ENCODE measurements at regions of chr18 and their contacts with region 1.

Region 1: GRCh38 chr18:45690975-45691815 is 32.8 kb upstream of the SLC14A1 start:
- DNase-seq: peak; percentile 92
- H3K4me3 Mint-ChIP-seq: no peak overlapping the region
- H3K27ac Mint-ChIP-seq: no peak overlapping the region
- H3K4me1 Mint-ChIP-seq: peaks cover 35% of the 10 kb centered on the region
- H3K27me3 Mint-ChIP-seq: peaks cover 49% of the 10 kb centered on the region

Region 2: DNA sequence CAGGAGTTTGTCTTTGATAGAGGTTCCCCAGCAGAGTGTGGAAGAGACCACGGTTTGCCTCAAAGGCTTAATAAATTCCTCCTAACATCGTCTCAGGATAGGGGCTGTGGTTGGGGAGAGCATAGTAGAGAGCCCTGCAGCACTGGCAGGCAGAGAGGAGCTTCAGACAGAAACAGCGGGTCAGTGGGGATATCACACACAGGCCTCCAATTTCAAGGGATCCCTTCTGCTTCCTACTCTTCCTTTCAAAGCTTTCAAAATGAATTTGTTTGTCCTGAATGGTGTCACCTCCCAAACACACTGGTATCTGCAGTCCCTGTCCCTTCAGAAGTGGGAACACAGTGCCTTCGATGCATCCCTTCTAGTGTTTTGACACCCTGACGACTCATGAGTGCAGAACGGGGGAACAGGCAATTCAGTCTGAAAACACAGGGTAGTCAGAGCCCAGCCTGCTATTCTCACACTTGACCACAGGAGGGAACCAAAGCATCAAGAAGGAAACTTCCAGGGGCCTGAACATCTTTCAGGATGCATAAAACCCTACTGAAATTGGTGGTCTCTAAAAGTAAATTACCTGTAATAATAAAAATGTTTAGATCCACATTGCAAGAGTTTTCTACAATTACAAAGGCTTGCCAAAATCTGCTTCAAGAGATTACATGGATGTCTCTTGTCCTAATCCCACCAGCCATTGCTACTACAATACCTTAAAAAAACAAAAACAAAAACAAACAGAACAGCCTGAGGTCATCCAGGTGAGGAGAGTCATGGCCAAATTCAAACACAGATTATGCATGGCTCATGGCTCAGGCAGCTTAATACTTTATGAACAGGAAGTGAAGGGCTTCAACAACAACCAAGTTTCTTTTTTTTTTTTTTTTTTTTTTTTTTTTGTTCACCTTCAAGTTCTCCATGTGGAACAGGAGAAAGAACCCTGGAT is 26.1 kb before region 1 on chr18:
- intact Hi-C with region 1: loop called (anchors 1 kb)
- DNase-seq: peak; percentile 90
- H3K4me3 Mint-ChIP-seq: peak overlapping the region; percentile 7
- H3K27ac Mint-ChIP-seq: no peak overlapping the region
- H3K4me1 Mint-ChIP-seq: peaks cover 46% of the 10 kb centered on the region
- H3K27me3 Mint-ChIP-seq: peaks cover 23% of the 10 kb centered on the region

Region 3: DNA sequence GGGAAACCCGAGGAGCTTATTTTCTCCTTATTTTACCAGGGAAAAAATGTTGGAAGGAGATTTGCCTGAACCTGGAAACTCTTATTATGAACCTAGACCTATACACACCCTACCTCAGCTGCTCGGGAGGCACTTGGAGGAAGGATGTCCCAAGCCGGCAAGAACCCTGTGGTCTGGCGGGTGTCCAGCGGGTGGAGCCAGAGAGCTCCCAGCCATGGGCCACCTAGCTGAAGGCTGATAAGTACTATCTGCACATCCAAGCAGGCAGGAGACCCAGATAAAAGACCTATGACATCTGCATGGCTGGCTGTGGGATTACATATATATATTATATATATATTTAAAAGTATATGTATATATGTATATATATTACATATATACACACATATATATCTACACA is 31.7 kb after region 1 on chr18:
- intact Hi-C with region 1: loop called (anchors 2 kb)
- DNase-seq: peak; percentile 91
- H3K4me3 Mint-ChIP-seq: no peak overlapping the region
- H3K27ac Mint-ChIP-seq: no peak overlapping the region
- H3K4me1 Mint-ChIP-seq: no peaks in the 10 kb centered on the region
- H3K27me3 Mint-ChIP-seq: peaks cover 31% of the 10 kb centered on the region

Region 4: GRCh38 chr18:45874491-45875184 is 183.4 kb after region 1 on chr18:
- intact Hi-C with region 1: loop called (anchors 1 kb)
- DNase-seq: peak; percentile 89
- H3K4me3 Mint-ChIP-seq: peak overlapping the region; percentile 58
- H3K27ac Mint-ChIP-seq: peak overlapping the region; percentile 94
- H3K4me1 Mint-ChIP-seq: peaks cover 20% of the 10 kb centered on the region
- H3K27me3 Mint-ChIP-seq: no peaks in the 10 kb centered on the region

Region 5: GRCh38 chr18:45910405-45911023 is 219.3 kb after region 1 on chr18:
- intact Hi-C with region 1: loop called (anchors 1 kb)
- DNase-seq: peak; percentile 89
- H3K4me3 Mint-ChIP-seq: no peak overlapping the region
- H3K27ac Mint-ChIP-seq: no peak overlapping the region
- H3K4me1 Mint-ChIP-seq: no peaks in the 10 kb centered on the region
- H3K27me3 Mint-ChIP-seq: no peaks in the 10 kb centered on the region

Measured in activated CD4-positive, alpha-beta T cell treated with anti-CD3 and anti-CD28 coated beads, Interleukin-2, amount 10 ng/mL, durations not matched to agents 24 days and 14 days (primary cell).